Right ventricle myocardium inferior (tissue), 1 donor: ENCODE measurements at regions of chr10 and their contacts with region 1.

Region 1: GRCh38 chr10:89591111-89591795 is 53.8 kb downstream of the PANK1 start:
- DNase-seq: no peak
- ATAC-seq: peak; percentile 75

Region 2: GRCh38 chr10:89625041-89625765 is 34.0 kb after region 1 on chr10:
- intact Hi-C with region 1: loop called (anchors 5 kb)
- DNase-seq: no peak
- ATAC-seq: no peak

Region 3: DNA sequence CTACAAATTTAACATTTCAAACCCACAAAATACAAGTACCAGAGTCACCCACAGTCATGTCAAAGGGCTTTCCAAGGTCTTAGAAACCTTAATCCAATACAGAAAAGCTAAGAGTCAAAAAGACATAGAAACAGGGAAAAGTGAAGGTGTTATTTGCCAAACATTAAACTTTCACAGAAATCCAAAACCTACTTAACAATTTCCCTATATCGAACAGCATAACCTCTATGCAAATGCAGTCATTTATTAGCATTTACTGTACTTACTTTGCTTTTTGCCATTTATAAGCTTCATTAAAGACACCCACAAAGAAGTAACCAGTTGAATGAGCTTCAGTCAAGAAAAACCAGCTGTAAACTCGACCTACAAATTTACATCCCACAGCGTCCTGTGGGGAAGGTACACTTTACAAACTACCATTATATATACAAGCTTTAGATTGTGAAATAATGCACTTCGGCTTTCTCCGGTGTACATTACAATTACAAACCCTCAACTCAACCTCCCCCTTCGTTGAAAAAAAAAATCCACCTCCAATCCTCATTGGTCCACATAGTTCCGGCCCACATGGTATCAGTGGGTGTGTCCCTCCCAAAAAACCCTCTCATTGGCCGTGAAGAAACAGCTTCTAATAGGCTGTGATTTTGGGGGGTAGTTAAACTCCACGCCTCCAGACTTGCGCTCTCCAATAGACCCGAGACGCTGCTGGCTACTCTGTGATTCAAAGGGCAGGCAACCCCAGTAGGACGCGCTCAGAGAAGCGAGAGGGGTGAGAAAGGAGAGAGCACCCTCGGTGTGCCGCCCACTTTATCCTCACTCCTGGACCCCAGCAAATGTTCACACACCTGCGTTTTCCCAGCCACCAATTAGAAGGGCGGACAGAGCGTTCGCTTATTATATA is 52.4 kb after region 1 on chr10:
- intact Hi-C with region 1: loop called (anchors 1 kb)
- DNase-seq: peak; percentile 79
- ATAC-seq: peak; percentile 89